Cardiac septum (tissue), 1 donor: ENCODE measurements at regions of chr15 and their contacts with region 1.

Region 1: GRCh38 chr15:77966540-77967290 is 110.8 kb downstream of the TBC1D2B start:
- DNase-seq: no peak

Region 2: DNA sequence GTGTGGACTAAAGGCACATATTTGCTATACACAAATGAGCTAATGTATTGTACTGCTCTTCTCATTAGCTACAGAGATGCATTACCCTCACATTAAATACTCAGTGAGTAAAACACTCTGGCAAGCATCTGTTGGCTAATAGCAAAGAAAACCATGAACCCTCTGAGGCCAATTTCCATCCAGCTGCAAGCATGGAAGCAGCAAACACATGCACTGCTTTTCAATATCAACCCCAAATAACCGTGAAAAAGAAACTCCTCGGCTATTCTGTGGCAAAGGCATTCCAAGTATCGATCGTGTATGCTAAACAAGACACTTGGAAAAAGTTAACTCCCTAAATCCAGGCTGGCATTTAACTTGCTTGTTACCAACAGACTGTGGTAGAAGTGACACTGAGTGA is 613.8 kb before region 1 on chr15:
- intact Hi-C with region 1: no loop called
- DNase-seq: no peak

Region 3: DNA sequence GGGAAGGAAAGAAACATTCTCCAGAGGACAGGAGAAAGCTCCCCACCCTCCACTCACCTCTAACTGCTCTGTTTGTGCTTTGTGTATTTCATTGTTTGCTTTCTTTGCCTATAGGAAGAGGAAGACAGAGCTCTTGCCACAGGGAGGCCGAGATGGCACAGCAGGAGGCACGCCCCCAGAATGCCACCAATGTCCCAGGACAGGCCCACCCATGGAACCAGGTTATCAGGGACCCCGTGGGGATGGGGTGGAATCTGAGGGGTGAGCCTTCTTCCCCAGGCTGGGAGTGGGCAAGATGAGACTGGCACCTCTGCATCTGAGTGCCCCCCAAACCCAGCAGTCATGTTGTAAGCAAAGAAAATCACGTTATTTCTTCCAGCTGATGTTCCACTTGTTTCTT is 45.1 kb before region 1 on chr15:
- intact Hi-C with region 1: no loop called
- DNase-seq: peak; percentile 44

Region 4: GRCh38 chr15:78000091-78000926 is 33.6 kb after region 1 on chr15:
- intact Hi-C with region 1: loop called (anchors 5 kb)
- DNase-seq: peak; percentile 87

Region 5: DNA sequence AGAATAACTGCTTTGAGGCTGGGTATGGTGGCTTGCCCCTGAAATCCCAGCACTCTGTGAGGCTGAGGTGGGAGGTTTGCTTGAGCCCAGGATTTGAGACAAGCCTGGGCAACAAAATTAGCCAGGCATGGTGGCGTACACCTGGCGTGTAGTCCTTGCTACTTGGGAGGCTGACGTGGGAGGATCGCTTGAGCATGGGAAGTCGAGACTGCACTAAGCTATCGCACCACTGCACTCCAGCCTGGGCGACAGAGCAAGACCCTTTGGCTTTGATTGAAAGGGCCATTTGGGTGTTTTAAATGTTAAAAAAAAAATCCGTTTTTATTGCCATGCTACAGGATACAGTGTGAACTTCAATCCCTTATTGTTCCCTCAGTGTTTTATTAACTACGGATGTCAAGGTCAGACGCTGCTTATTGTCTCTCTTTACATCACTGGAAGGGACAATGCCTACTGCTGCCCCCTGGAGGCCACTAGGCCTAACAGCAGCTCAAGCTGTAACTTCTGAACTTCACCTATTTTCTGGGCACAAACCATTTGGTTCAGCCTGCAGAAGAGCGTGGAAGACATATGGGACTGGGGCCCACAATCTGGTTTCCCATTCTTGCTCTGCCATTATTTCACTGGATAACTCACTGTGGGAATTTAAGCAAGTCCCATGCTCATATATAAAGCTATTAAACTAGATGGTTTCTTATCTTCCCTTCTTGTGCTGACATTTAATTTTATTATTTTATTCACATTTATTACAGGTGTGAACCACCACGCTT is 456.0 kb after region 1 on chr15:
- intact Hi-C with region 1: loop called (anchors 10 kb)
- DNase-seq: no peak